ENCODE measurements at regions of chr9 and their contacts with region 1.

Region 1: GRCh38 chr9:87684627-87685219 is 41.2 kb upstream of the CTSL start:
- DNase-seq: peak; percentile 73
- H3K4me3 ChIP-seq: no peak overlapping the region
- H3K27ac ChIP-seq: no peak overlapping the region
- H3K4me1 ChIP-seq: no peaks in the 10 kb centered on the region
- H3K27me3 ChIP-seq: no peaks in the 10 kb centered on the region
- CTCF ChIP-seq: peak; percentile 87

Region 2: GRCh38 chr9:87883990-87884389 is 199.3 kb after region 1 on chr9:
- intact Hi-C with region 1: loop called (anchors 10 kb)
- DNase-seq: peak; percentile 25
- H3K4me3 ChIP-seq: no peak overlapping the region
- H3K27ac ChIP-seq: no peak overlapping the region
- H3K4me1 ChIP-seq: peaks cover 2% of the 10 kb centered on the region
- H3K27me3 ChIP-seq: no peaks in the 10 kb centered on the region
- CTCF ChIP-seq: peak; percentile 12

Region 3: DNA sequence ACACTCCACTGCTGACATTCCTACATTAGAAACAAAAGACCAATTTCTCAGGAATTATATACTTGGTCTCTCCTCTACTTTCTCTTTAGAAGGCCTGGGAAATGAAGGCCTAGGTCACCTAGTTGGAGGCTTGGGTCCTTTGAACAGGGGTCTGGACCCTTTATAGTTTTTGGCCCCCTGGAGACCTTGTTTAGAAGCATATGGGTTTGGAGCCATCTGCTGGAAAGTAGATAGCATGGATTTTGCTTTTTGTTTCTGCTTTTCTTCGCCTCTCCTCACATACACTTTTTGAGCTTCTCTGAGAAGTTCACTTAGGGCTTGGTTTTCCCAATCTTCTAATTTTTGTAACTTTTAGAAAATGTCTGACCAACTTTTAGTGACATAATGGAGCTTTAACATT is 356.7 kb after region 1 on chr9:
- intact Hi-C with region 1: loop called (anchors 5 kb)
- DNase-seq: no peak
- H3K4me3 ChIP-seq: no peak overlapping the region
- H3K27ac ChIP-seq: no peak overlapping the region
- H3K4me1 ChIP-seq: no peaks in the 10 kb centered on the region
- H3K27me3 ChIP-seq: no peaks in the 10 kb centered on the region
- CTCF ChIP-seq: no peak